Heart left ventricle (tissue), 16 donors: ENCODE measurements at regions of chr20 and their contacts with region 1.

Region 1: DNA sequence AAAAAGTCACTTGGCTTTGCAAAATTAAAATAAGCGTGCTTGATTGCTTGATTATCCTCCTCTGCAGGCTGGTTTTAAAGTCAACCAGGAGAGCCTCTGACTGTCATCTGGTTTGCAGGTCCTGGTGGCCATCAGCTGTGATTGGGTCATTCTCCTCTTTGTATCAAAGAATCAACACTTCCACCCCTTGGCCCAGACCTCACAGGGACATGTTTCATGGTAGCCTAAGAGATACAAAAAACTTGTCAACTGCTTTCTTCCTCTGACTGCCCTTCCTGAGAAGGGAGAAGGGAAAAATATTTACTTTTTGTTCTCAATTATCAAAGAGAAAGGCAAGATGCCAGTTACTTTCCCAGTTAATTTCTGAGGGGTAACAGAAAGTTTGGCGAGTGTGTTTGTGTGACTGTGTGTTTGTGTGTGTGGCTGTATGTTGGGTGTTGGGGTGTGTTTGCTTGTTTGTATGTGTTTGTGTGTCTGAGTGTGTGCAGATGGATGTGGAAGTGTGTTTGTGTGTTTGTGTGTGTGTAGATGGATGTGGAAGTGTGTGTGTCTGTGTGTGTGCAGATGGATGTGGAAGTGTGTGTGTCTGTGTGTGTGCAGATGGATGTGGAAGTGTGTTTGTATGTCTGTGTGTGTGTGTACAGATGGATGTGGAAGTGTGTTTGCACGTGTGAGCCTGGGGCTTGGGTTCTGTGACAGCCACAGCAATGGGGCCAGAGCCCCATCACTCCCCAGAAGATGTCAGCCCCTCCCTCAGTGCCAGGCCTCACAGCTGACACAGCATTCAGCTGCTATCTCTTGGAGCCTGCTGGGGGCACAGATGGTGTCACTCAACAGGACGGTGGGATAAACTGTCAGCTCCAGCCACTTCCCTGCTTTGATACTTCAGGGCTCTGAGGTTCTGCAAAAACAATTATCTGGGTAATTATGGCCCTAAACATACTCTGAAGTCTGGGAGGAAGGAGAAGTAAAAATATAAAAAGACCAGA is 98.6 kb upstream of the RNF24 start:
- DNase-seq: no peak
- ATAC-seq: peak in 1 of 4 donors; percentile 58
- H3K4me3 ChIP-seq: no peak overlapping the region
- H3K27ac ChIP-seq: peak overlapping the region in 4 of 12 donors; percentile 10 to 30 (median 26)
- H3K4me1 ChIP-seq: peaks cover 0 to 36% (median 13%) of the 10 kb centered on the region in 12 donors
- H3K27me3 ChIP-seq: no peaks in the 10 kb centered on the region
- CTCF ChIP-seq: no peak
- POLR2A ChIP-seq: no peak

Region 2: GRCh38 chr20:4150070-4150441 is 36.1 kb after region 1 on chr20:
- intact Hi-C with region 1: loop called in 1 of 10 experiments (anchors 2 kb)
- DNase-seq: no peak
- ATAC-seq: peak in 1 of 4 donors; percentile 26
- H3K4me3 ChIP-seq: peak overlapping the region in 11 of 12 donors; percentile 61 to 96 (median 77)
- H3K27ac ChIP-seq: no peak overlapping the region
- H3K4me1 ChIP-seq: peaks cover 0 to 48% (median 13%) of the 10 kb centered on the region in 12 donors
- H3K27me3 ChIP-seq: peaks cover 0 to 12% (median 0%) of the 10 kb centered on the region in 9 donors
- CTCF ChIP-seq: no peak
- POLR2A ChIP-seq: no peak